ENCODE measurements at regions of chr22 and their contacts with region 1.

Region 1: DNA sequence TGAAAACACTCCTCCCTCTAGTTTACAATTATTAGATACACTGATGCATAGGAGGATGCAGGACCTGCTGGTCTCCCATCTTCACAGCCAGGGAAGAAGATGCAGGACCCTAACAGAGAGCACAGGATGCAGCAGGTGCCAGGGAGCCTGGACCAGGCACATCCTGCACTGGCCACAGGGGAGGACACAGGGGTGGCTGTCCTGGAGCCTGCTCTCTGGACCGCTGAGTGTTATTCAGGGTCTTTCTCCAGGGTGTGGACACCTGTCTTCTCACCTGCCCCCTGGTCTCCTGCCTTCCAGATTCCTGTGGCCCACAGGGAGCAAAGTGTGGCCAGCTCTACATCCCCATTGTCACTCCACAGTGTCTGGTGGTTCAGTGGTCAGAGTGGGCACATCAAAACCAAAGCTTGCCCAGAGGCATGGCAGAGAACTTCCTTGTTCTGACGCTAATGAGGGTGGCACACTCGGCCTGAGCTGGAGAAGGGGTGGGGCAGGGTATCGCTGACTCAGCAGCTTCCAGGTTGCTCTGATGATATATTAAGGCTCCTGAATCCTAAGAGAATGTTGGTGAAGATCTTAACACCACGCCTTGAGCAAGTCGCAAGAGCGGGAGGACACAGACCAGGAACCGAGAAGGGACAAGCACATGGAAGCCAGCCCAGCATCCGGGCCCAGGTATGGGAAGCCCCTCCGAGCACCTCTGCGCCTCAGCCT is at the start of gene APOBEC3A:
- DNase-seq: peak; percentile 84
- ATAC-seq: no peak
- total RNA-seq, gene APOBEC3A: 0.78 TPM

Region 2: GRCh38 chr22:38494498-38494897 is 462.7 kb before region 1 on chr22:
- intact Hi-C with region 1: no loop called
- DNase-seq: no peak
- ATAC-seq: no peak

Region 3: GRCh38 chr22:38733724-38734381 is 223.3 kb before region 1 on chr22:
- intact Hi-C with region 1: no loop called
- DNase-seq: no peak
- ATAC-seq: peak; percentile 65

Region 4: DNA sequence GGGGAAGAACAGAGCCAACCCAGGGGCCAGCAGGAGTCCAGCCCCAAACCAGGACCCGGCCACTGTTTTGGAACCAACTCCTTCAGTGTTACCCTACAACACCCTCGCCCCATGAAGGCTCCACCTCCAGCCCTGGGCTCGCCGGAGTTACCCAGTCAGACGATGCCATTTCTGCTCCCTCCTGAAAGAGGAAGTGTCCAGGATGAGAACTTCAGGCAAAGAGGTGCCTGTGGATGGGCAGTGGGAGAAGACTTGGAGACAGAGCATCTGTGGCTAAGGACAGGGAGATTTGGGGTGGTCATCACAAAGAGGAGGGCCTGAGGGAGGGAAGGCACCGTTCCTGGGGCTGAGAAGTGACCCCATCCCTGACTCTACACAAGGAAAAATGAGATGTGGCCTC is 38.9 kb after region 1 on chr22:
- intact Hi-C with region 1: loop called (anchors 5 kb)
- DNase-seq: no peak
- ATAC-seq: no peak

Measured in Right ventricle myocardium inferior (tissue), 1 donor.